CD8-positive, alpha-beta T cell (primary cell): ENCODE measurements at regions of chr7 and their contacts with region 1.

Region 1: DNA sequence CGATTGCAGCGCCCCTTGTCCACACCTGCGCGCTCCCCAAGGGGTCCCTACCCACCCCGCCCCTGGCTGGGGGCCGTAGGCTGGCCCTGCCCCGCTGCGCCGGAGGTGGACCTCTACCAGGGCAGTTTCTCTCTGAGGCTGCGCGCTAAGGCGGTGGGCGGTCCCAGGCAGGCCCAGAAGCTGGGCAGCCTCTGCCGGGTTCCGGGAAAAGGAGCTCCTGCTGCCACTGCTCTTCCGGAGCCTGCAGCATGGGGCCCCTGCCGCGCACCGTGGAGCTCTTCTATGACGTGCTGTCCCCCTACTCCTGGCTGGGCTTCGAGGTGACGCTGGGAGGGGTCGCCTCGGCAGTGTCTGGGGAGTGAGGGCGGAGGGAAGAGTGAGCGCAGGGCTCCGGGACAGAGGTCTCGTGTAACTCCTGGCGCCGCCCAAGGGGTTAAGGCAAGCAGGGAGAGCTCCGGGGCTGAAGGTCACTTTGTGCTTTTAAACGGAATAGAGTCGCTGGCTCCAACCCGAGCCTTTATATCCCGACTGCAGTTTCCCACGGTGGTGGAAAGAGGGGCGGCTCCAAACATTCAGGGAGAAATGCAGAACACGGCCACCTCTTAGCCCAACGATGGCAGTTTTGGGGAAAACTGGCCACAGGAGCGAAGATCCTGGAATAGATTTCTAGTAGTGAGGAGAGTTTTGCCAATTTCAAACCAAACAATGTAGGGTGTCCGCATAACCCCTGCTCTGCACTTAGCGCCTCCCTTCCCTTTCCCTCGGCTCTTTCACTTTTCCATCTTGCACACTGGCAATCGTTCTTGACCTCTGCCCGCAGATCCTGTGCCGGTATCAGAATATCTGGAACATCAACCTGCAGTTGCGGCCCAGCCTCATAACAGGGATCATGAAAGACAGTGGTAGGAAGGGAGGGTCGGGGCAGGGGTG is at the start of gene GSTK1:
- DNase-seq: peak; percentile 34 to 86 (median 79)
- ATAC-seq: peak; percentile 95
- H3K4me3 ChIP-seq: peak within 1 kb of the TSS; percentile 90 to 98
- H3K4me3 Mint-ChIP-seq: peak within 1 kb of the TSS; percentile 96
- H3K27ac ChIP-seq: peak within 1 kb of the TSS; percentile 70 to 80
- H3K27ac Mint-ChIP-seq: peak within 1 kb of the TSS; percentile 97
- H3K4me1 ChIP-seq: peaks cover 34% of the 10 kb centered on the region
- H3K4me1 Mint-ChIP-seq: peaks cover 63% of the 10 kb centered on the region
- H3K27me3 ChIP-seq: no peaks in the 10 kb centered on the region
- H3K27me3 Mint-ChIP-seq: no peaks in the 10 kb centered on the region
- CTCF ChIP-seq: no peak
- total RNA-seq, gene GSTK1: 200 to 208 TPM

Region 2: GRCh38 chr7:142925413-142925812 is 338.1 kb before region 1 on chr7:
- CTCF ChIA-PET with region 1: no interaction called
- POLR2A ChIA-PET with region 1: no interaction called
- intact Hi-C with region 1: no loop called
- DNase-seq: no peak
- ATAC-seq: no peak
- H3K4me3 ChIP-seq: no peak overlapping the region
- H3K4me3 Mint-ChIP-seq: no peak overlapping the region
- H3K27ac ChIP-seq: no peak overlapping the region
- H3K27ac Mint-ChIP-seq: no peak overlapping the region
- H3K4me1 ChIP-seq: no peaks in the 10 kb centered on the region
- H3K4me1 Mint-ChIP-seq: no peaks in the 10 kb centered on the region
- H3K27me3 ChIP-seq: no peaks in the 10 kb centered on the region
- H3K27me3 Mint-ChIP-seq: no peaks in the 10 kb centered on the region
- CTCF ChIP-seq: no peak

Region 3: DNA sequence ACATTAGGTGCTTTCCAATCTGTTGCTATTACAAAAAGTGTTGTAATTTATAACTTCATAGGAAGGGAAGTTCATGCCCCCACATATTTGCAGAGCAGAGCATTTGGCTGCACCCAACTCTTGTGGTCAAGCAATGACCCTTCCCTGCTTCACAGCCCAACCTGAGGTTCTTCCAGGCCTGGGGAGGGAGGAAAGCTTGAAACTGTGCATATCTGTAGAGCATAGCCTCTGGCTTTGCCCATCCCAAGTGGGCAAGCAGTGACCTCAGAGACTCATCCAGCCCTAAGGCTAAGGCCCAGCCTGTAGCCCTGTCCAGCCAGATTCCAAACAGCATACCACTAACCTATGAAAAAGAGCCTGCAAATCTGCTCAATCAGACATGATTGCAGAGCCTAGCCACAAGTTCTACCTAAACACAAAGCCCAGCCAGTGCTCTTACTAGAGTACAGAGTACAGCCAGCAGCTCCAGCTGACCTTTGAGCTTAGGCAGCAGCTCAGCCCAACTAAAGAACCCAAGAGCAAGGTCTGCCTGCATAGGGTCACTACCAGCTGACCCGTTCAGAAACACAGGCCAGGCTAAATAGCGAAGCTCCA is 14.7 kb before region 1 on chr7:
- CTCF ChIA-PET with region 1: interaction called, 15 read pairs
- POLR2A ChIA-PET with region 1: interaction called, 6 read pairs
- intact Hi-C with region 1: loop called in 1 of 2 experiments (anchors 1 kb)
- DNase-seq: no peak
- ATAC-seq: no peak
- H3K4me3 ChIP-seq: no peak overlapping the region
- H3K4me3 Mint-ChIP-seq: no peak overlapping the region
- H3K27ac ChIP-seq: no peak overlapping the region
- H3K27ac Mint-ChIP-seq: peak overlapping the region; percentile 73
- H3K4me1 ChIP-seq: peaks cover 60% of the 10 kb centered on the region
- H3K4me1 Mint-ChIP-seq: peaks cover 79% of the 10 kb centered on the region
- H3K27me3 ChIP-seq: no peaks in the 10 kb centered on the region
- H3K27me3 Mint-ChIP-seq: no peaks in the 10 kb centered on the region
- CTCF ChIP-seq: no peak

Region 4: DNA sequence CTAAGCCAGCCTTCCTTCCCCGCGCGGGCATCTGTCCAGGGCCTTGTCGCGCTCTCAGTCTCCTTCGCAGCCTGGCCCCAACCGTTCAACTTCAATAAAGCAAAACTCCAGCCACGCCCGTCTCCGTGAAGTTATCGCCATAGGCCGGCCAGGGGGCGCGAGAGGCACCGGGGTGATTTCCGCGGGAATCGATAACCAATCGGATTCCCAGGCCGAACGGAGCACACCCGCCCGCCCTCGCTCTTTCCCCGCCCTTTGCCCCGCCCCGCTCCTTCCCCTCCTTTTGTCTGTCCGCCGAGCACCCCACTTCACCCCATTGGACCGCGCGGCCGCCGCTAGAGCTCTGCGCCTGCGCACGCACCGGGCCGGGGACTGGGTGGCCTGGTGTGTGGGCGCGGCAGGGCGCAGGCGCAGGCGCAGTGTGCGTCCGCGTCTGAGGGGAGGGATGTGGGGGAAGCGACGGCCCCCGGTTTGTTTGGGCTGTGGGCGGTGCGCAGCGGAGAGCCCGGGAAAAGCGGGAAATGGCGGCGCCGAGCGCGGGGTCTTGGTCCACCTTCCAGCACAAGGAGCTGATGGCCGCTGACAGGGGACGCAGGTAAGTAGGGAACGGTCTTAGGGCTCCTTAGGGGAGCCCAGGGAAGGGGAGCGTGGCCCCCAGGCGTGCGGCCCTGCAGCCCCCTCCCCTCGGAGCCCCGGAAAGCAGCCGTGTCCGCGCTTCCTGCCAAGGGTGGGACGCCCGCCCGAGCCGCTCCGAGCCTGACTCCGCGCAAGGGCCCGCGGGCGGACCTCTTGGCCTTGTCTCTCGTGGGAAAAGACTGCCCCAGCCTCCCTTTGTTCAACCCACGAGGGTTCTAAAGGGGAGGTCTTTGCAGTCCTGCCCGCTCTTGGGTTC is 24.6 kb after region 1 on chr7 and contains the start of gene CASP2:
- CTCF ChIA-PET with region 1: interaction called, 4 read pairs
- POLR2A ChIA-PET with region 1: interaction called, 10 read pairs
- intact Hi-C with region 1: loop called (anchors 1 to 2 kb)
- DNase-seq: peak; percentile 96 to 100 (median 99)
- ATAC-seq: peak; percentile 96
- H3K4me3 ChIP-seq: peak within 1 kb of the TSS; percentile 91 to 95
- H3K4me3 Mint-ChIP-seq: peak within 1 kb of the TSS; percentile 93
- H3K27ac ChIP-seq: peak within 1 kb of the TSS; percentile 64 to 72
- H3K27ac Mint-ChIP-seq: peak within 1 kb of the TSS; percentile 91
- H3K4me1 ChIP-seq: peaks cover 40% of the 10 kb centered on the region
- H3K4me1 Mint-ChIP-seq: peaks cover 53% of the 10 kb centered on the region
- H3K27me3 ChIP-seq: no peaks in the 10 kb centered on the region
- H3K27me3 Mint-ChIP-seq: no peaks in the 10 kb centered on the region
- CTCF ChIP-seq: peak; percentile 31
- total RNA-seq, gene CASP2: 16.0 to 19.1 TPM

Region 5: DNA sequence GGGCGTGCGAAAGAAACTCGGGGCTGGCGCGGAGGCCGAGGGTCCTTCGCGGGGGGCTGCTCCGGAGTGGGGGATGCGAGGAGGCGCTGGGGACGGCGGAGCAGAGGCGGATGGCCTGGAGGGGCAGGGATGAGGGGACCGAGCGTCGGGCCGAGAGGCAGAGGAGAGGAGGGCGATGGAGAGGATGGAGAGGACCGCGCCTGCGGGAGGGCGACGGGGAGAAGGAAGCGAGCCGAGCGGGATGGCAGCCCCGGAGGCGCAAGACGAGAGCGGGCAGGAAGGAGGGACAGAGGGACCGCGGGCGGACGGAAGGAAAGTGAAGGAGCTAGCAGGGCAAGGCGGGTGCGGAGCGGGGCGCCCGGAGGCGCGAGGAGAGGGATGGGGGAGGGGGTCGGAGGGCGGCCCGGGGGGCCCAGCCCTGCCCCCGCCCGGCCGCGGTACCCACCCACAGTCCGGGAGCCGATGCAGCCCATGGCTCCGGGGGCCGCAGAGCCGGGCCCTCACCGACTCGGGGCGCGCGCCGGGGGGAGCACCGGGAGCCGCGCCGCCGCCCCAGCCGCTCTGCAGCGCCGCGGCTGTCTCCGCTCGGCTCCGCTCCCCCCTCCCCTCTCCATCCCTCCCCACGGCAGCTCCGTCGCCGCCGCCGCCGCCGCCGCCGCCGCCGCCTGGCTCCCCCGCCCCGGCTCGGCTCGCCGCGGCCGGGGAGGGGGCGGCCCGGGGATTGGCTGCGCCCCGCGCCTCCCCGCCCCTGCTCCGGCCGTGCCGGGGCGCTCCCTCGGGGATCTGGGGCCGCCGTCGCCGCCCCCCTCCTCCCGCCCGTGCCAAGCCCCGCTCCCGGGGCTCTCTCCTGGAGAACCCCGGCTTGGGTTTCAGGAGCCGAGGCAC is 98.8 kb after region 1 on chr7 and contains the start of gene FAM131B:
- CTCF ChIA-PET with region 1: no interaction called
- POLR2A ChIA-PET with region 1: no interaction called
- intact Hi-C with region 1: loop called in 1 of 2 experiments (anchors 5 kb)
- DNase-seq: peak in 5 of 9 experiments; percentile 41 to 74 (median 64)
- ATAC-seq: peak; percentile 82
- H3K4me3 ChIP-seq: peak within 1 kb of the TSS; percentile 60 to 71
- H3K4me3 Mint-ChIP-seq: peak within 1 kb of the TSS; percentile 89
- H3K27ac ChIP-seq: no peak within 1 kb of the TSS
- H3K27ac Mint-ChIP-seq: peak within 1 kb of the TSS; percentile 45
- H3K4me1 ChIP-seq: peaks cover 4% of the 10 kb centered on the region
- H3K4me1 Mint-ChIP-seq: peaks cover 5% of the 10 kb centered on the region
- H3K27me3 ChIP-seq: no peaks in the 10 kb centered on the region
- H3K27me3 Mint-ChIP-seq: peaks cover 9% of the 10 kb centered on the region
- CTCF ChIP-seq: no peak
- total RNA-seq, gene FAM131B: 0.30 to 0.36 TPM